ENCODE measurements at regions of chr6 and their contacts with region 1.

Region 1: DNA sequence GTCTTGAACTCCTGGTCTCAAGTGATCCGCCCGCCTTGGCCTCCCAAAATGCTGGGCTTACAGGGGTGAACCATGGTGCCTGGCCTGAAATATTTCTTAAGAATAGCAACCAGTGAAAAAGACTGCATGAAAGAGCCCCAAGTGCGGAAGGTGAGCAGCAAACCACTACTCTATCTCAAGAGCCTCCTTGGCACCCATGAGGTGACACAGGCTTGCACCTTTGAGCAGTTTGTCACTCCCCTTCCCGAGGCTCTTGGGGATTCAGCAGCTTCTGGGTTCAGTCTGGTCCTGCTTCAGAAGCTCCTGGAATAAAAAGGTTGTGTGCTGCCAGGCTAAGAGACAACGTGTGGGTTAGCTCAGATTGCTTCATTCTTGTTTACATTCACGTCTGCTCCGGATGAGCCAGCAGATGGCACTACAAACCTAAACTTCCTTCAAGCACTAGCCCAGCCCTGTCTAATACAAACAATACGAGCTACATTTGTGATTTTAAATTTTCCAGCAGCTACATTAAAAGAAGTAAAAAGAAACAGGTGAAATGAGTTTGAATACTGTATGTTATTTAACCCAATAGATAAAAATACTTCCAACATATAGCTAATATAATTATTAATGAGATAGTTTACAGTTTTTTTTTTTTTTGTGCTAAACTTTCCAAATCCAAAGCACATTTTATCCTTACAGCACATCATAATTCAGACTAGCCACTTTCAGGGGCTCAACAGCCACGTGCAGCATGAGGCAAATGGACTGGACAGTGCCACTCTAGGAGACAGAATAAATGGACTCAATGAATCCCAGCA is 46.2 kb downstream of the GJA10 start:
- DNase-seq: peak; percentile 38 to 87 (median 69)
- ATAC-seq: peak; percentile 95
- H3K4me3 ChIP-seq: no peak overlapping the region
- H3K4me3 Mint-ChIP-seq: no peak overlapping the region
- H3K27ac ChIP-seq: no peak overlapping the region
- H3K27ac Mint-ChIP-seq: peak overlapping the region; percentile 81
- H3K4me1 ChIP-seq: peaks cover 16% of the 10 kb centered on the region
- H3K4me1 Mint-ChIP-seq: peaks cover 40% of the 10 kb centered on the region
- H3K27me3 ChIP-seq: no peaks in the 10 kb centered on the region
- H3K27me3 Mint-ChIP-seq: no peaks in the 10 kb centered on the region
- CTCF ChIP-seq: peak; percentile 80

Region 2: GRCh38 chr6:89952686-89953085 is 12.3 kb after region 1 on chr6:
- CTCF ChIA-PET with region 1: interaction called, 28 read pairs
- POLR2A ChIA-PET with region 1: no interaction called
- intact Hi-C with region 1: no loop called
- DNase-seq: peak; percentile 36 to 92 (median 65)
- ATAC-seq: peak; percentile 84
- H3K4me3 ChIP-seq: no peak overlapping the region
- H3K4me3 Mint-ChIP-seq: peak overlapping the region; percentile 71
- H3K27ac ChIP-seq: peak overlapping the region; percentile 24 to 47
- H3K27ac Mint-ChIP-seq: peak overlapping the region; percentile 94
- H3K4me1 ChIP-seq: peaks cover 55% of the 10 kb centered on the region
- H3K4me1 Mint-ChIP-seq: peaks cover 70% of the 10 kb centered on the region
- H3K27me3 ChIP-seq: no peaks in the 10 kb centered on the region
- H3K27me3 Mint-ChIP-seq: no peaks in the 10 kb centered on the region
- CTCF ChIP-seq: no peak

Region 3: GRCh38 chr6:89984926-89985750 is 44.7 kb after region 1 on chr6:
- CTCF ChIA-PET with region 1: interaction called, 6 read pairs
- POLR2A ChIA-PET with region 1: no interaction called
- intact Hi-C with region 1: loop called in 1 of 2 experiments (anchors 5 kb)
- DNase-seq: no peak
- ATAC-seq: no peak
- H3K4me3 ChIP-seq: no peak overlapping the region
- H3K4me3 Mint-ChIP-seq: no peak overlapping the region
- H3K27ac ChIP-seq: no peak overlapping the region
- H3K27ac Mint-ChIP-seq: peak overlapping the region; percentile 55
- H3K4me1 ChIP-seq: peaks cover 37% of the 10 kb centered on the region
- H3K4me1 Mint-ChIP-seq: peaks cover 71% of the 10 kb centered on the region
- H3K27me3 ChIP-seq: no peaks in the 10 kb centered on the region
- H3K27me3 Mint-ChIP-seq: no peaks in the 10 kb centered on the region
- CTCF ChIP-seq: no peak

Region 4: GRCh38 chr6:90179190-90180169 is 239.1 kb after region 1 on chr6:
- CTCF ChIA-PET with region 1: interaction called, 18 read pairs
- POLR2A ChIA-PET with region 1: no interaction called
- intact Hi-C with region 1: loop called (anchors 1 to 5 kb)
- DNase-seq: peak in 4 of 9 experiments; percentile 29 to 65 (median 41)
- ATAC-seq: no peak
- H3K4me3 ChIP-seq: no peak overlapping the region
- H3K4me3 Mint-ChIP-seq: no peak overlapping the region
- H3K27ac ChIP-seq: no peak overlapping the region
- H3K27ac Mint-ChIP-seq: peak overlapping the region; percentile 94
- H3K4me1 ChIP-seq: peaks cover 67% of the 10 kb centered on the region
- H3K4me1 Mint-ChIP-seq: peaks cover 84% of the 10 kb centered on the region
- H3K27me3 ChIP-seq: no peaks in the 10 kb centered on the region
- H3K27me3 Mint-ChIP-seq: no peaks in the 10 kb centered on the region
- CTCF ChIP-seq: peak; percentile 73

Region 5: GRCh38 chr6:90290811-90291420 is 350.5 kb after region 1 on chr6:
- CTCF ChIA-PET with region 1: interaction called, 16 read pairs
- POLR2A ChIA-PET with region 1: interaction called, 6 read pairs
- intact Hi-C with region 1: loop called (anchors 2 to 5 kb)
- DNase-seq: peak in 1 of 9 experiments; percentile 6
- ATAC-seq: no peak
- H3K4me3 ChIP-seq: peak overlapping the region in 1 of 2 experiments; percentile 13
- H3K4me3 Mint-ChIP-seq: peak overlapping the region; percentile 94
- H3K27ac ChIP-seq: peak overlapping the region; percentile 16 to 56
- H3K27ac Mint-ChIP-seq: peak overlapping the region; percentile 74
- H3K4me1 ChIP-seq: peaks cover 73% of the 10 kb centered on the region
- H3K4me1 Mint-ChIP-seq: peaks cover 85% of the 10 kb centered on the region
- H3K27me3 ChIP-seq: no peaks in the 10 kb centered on the region
- H3K27me3 Mint-ChIP-seq: no peaks in the 10 kb centered on the region
- CTCF ChIP-seq: no peak

Measured in CD8-positive, alpha-beta T cell (primary cell).